Gastrocnemius medialis (tissue), 4 donors: ENCODE measurements at regions of chr12 and their contacts with region 1.

Region 1: DNA sequence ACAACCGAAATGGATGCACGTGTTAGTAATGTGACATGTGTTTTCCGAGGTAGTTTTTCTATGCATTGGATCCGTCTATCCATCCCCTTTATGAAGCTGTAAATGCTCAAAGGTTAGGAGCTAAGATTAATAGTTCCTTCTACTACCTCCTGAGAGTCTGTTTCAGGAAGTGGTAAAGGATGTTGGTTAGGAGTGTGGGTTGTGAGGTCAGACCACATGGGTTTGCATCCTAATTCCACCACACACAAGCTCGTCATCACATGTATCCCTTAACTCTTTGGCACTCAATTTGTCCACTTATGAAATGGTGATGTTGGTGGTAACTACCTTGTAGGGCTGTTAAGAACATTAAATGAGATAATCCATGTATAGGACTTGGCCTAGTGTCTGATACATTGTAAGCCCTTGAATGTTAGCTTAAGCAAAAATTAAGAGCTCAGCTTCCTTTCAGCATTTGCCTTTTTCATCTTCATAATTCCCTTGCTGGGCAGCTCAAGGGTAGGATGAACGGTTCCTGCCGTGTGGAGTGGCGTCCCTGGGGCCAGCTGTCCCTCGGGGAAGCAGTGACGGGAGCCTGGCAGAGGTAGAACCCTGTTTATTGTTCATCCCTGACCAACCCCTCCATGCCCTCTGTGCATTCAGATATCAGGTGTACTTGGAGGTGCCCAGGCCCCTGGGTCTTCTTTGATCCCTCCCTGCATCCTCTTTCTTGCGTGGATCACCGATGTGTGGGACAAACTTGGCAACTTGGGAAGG is 52.3 kb downstream of the TSPAN9 start:
- DNase-seq: no peak
- ATAC-seq: peak in 1 of 2 donors; percentile 9
- H3K4me3 ChIP-seq: peak overlapping the region; percentile 11 to 50 (median 33)
- H3K27ac ChIP-seq: peak overlapping the region; percentile 5 to 58 (median 44)
- H3K4me1 ChIP-seq: peaks cover 20 to 29% of the 10 kb centered on the region in 2 donors
- H3K27me3 ChIP-seq: no peaks in the 10 kb centered on the region
- CTCF ChIP-seq: no peak
- POLR2A ChIP-seq: no peak

Region 2: GRCh38 chr12:3041558-3042164 is 87.8 kb before region 1 on chr12:
- in situ Hi-C with region 1: no loop called
- intact Hi-C with region 1: no loop called
- DNase-seq: peak in 1 of 2 donors; percentile 69
- ATAC-seq: peak; percentile 57 to 67
- H3K4me3 ChIP-seq: no peak overlapping the region
- H3K27ac ChIP-seq: peak overlapping the region in 3 of 4 donors; percentile 4 to 62 (median 39)
- H3K4me1 ChIP-seq: peaks cover 20 to 35% of the 10 kb centered on the region in 2 donors
- H3K27me3 ChIP-seq: no peaks in the 10 kb centered on the region
- CTCF ChIP-seq: peak; percentile 48 to 79 (median 64)
- POLR2A ChIP-seq: no peak

Region 3: DNA sequence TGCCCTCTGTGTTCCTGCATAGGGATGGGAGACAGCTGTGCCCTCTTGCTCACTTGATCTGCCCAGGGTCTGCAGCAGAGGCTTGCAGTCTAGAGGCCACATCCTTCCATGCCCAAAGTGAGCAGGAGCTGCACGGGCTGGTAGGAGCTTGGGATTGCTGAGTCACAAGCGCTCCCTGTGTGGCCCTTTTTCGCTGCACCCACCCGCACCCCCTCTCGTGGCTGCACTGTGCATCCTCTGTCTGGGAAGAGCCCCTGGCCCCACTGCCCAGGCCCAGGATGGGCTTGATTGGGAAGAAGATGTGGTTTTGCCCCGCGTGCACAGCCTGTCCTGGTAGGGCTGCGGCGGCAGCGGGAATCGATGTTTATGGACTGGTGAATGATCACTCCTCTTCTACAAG is 140.1 kb after region 1 on chr12:
- in situ Hi-C with region 1: loop called in 1 of 4 experiments (anchors 5 kb)
- intact Hi-C with region 1: no loop called
- DNase-seq: no peak
- ATAC-seq: no peak
- H3K4me3 ChIP-seq: no peak overlapping the region
- H3K27ac ChIP-seq: no peak overlapping the region
- H3K4me1 ChIP-seq: peaks cover under 1 to 3% of the 10 kb centered on the region in 2 donors
- H3K27me3 ChIP-seq: no peaks in the 10 kb centered on the region
- CTCF ChIP-seq: no peak
- POLR2A ChIP-seq: no peak